Heart right ventricle (tissue), 16 donors: ENCODE measurements at regions of chr3 and their contacts with region 1.

Region 1: GRCh38 chr3:38479431-38480092 is 16.6 kb upstream of the EXOG start:
- DNase-seq: peak; percentile 42 to 67
- ATAC-seq: peak; percentile 76 to 90 (median 83)
- H3K4me3 ChIP-seq: no peak overlapping the region
- H3K27ac ChIP-seq: no peak overlapping the region
- H3K4me1 ChIP-seq: no peaks in the 10 kb centered on the region
- H3K27me3 ChIP-seq: no peaks in the 10 kb centered on the region
- CTCF ChIP-seq: peak; percentile 81 to 94 (median 91)

Region 2: GRCh38 chr3:38004415-38005076 is 475.0 kb before region 1 on chr3:
- intact Hi-C with region 1: loop called in 2 of 10 experiments (anchors 10 kb)
- DNase-seq: peak; percentile 65 to 75
- ATAC-seq: peak; percentile 58 to 79 (median 77)
- H3K4me3 ChIP-seq: peak overlapping the region in 6 of 10 donors; percentile 17 to 51 (median 42)
- H3K27ac ChIP-seq: peak overlapping the region; percentile 1 to 83 (median 56)
- H3K4me1 ChIP-seq: peaks cover 0 to 24% (median 6%) of the 10 kb centered on the region in 9 donors
- H3K27me3 ChIP-seq: no peaks in the 10 kb centered on the region
- CTCF ChIP-seq: peak; percentile 48 to 81 (median 70)

Region 3: GRCh38 chr3:38117748-38118420 is 361.7 kb before region 1 on chr3:
- intact Hi-C with region 1: loop called in 5 of 10 experiments (anchors 5 to 10 kb)
- DNase-seq: peak; percentile 38 to 62
- ATAC-seq: peak; percentile 45 to 79 (median 68)
- H3K4me3 ChIP-seq: no peak overlapping the region
- H3K27ac ChIP-seq: no peak overlapping the region
- H3K4me1 ChIP-seq: peaks cover 0 to 14% (median 4%) of the 10 kb centered on the region in 9 donors
- H3K27me3 ChIP-seq: peaks cover 0 to 6% (median 0%) of the 10 kb centered on the region in 7 donors
- CTCF ChIP-seq: peak; percentile 38 to 75 (median 68)

Region 4: GRCh38 chr3:38127611-38128302 is 351.8 kb before region 1 on chr3:
- intact Hi-C with region 1: loop called in 3 of 10 experiments (anchors 5 to 10 kb)
- DNase-seq: no peak
- ATAC-seq: peak in 6 of 8 donors; percentile 13 to 52 (median 32)
- H3K4me3 ChIP-seq: no peak overlapping the region
- H3K27ac ChIP-seq: peak overlapping the region in 8 of 10 donors; percentile 3 to 62 (median 40)
- H3K4me1 ChIP-seq: peaks cover 0 to 46% (median 23%) of the 10 kb centered on the region in 9 donors
- H3K27me3 ChIP-seq: no peaks in the 10 kb centered on the region
- CTCF ChIP-seq: no peak

Region 5: DNA sequence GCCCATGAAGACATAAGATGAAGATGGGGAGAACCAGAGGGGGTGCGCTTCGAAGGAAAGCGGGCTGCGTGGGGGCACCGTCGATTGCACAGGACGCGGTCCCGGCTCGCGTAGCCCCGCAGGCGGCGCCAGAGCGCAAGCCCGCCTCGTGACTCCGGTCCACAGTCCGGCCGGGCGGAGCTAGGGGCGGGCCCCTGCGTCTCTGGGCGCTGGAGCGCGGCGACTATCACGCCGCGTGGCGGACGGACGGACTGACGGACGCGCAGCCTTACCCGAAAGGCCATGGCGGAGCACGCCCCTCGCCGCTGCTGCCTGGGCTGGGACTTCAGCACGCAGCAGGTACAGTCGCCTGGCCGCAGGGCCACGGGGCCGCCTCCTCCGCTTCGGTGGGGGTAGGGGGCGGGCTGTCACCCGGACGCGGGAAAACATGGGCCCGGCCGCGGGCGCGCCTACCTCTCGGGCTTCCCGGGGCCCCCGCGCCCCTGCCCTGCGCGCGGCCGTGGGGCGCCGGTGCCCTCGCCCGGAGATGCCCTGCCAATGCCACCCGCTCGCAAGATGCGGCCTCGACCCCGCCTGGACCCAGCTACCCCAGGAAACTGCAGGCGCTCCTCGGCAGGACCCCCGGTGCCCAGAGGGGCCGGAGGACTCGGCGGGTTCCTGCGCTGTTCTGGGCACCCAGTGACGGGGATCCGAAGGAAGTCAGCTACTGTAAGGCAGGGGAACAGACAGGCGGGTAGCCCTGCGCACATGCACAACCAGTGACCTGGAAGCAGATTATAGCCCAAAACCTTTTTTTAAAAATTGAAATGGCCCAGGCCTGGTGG is 132.8 kb before region 1 on chr3 and contains the start of gene XYLB:
- intact Hi-C with region 1: loop called (anchors 2 to 5 kb)
- DNase-seq: peak; percentile 79 to 89
- ATAC-seq: peak; percentile 96 to 100 (median 99)
- H3K4me3 ChIP-seq: peak within 1 kb of the TSS; percentile 27 to 87 (median 82)
- H3K27ac ChIP-seq: peak within 1 kb of the TSS in 6 of 10 donors; percentile 29 to 75 (median 48)
- H3K4me1 ChIP-seq: peaks cover 0 to 22% (median 9%) of the 10 kb centered on the region in 9 donors
- H3K27me3 ChIP-seq: no peaks in the 10 kb centered on the region
- CTCF ChIP-seq: peak; percentile 68 to 95 (median 87)
- total RNA-seq, gene XYLB: 0.42 to 1.7 (median 0.73) TPM